ENCODE measurements at regions of chr11 and their contacts with region 1.

Region 1: DNA sequence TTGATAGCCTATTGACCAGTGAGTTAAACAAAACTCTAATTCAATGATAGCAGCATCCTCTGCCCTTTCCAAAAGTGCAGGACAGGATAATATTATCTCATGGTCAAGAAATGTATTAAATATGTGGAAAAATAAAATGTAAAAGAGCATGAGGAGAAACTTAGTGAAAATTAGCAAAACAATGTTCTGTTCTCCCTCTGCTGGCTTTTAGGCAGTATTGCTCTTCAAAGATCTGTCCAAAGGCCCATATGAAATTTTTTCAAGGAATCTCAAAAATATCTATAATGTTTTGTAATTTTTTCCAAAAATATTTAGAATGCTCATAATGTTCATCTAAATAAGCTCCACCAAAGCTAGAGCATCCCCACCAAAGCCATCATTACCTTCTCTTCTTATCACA is 8.3 kb upstream of the ARL14EP start:
- DNase-seq: no peak
- H3K4me3 ChIP-seq: no peak overlapping the region
- H3K27ac ChIP-seq: no peak overlapping the region
- H3K4me1 ChIP-seq: no peaks in the 10 kb centered on the region
- H3K27me3 ChIP-seq: no peaks in the 10 kb centered on the region
- CTCF ChIP-seq: peak; percentile 18 to 54 (median 46)
- POLR2A ChIP-seq: no peak

Region 2: DNA sequence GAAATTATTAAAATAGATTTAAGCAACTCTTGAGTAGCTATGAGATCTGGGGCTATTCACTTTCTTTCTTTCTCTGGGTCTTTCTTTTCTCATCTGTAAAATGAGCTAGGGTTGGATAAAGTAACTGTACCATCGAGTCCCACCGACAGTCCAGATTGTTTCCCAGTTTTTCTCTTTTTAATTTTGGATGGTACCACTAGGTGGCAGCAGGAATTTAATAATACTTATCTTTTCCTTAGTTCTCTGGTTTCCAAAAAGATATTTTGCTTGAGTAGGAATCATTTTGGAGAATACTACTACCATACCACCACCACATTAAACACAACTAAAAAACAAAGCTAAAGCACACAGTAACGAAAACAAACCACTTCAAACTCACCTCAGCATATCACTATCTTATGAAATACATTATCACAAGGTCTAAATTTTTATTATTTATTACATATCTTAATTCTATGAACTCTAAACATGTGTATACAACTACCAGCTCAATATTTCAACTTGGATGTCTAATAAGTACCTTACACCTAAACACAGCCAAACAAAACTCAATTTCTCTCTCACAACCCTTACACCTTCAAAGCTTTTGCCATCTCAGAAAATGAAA is 881.8 kb before region 1 on chr11:
- intact Hi-C with region 1: loop called in 1 of 2 experiments (anchors 10 kb)
- DNase-seq: no peak
- H3K4me3 ChIP-seq: no peak overlapping the region
- H3K27ac ChIP-seq: no peak overlapping the region
- H3K4me1 ChIP-seq: no peaks in the 10 kb centered on the region
- H3K27me3 ChIP-seq: no peaks in the 10 kb centered on the region
- CTCF ChIP-seq: peak; percentile 47 to 67 (median 62)
- POLR2A ChIP-seq: no peak